ENCODE measurements at regions of chr11 and their contacts with region 1.

Region 1: GRCh38 chr11:85844426-85845129 is 10.6 kb upstream of the CCDC83 start:
- DNase-seq: peak; percentile 68 to 100
- H3K4me3 ChIP-seq: peak overlapping the region; percentile 22; the same call in 1 of the 2 replicates
- H3K27ac ChIP-seq: peak overlapping the region; percentile 94
- H3K4me1 ChIP-seq: peaks cover 29% of the 10 kb centered on the region
- H3K27me3 ChIP-seq: no peaks in the 10 kb centered on the region
- CTCF ChIP-seq: no peak

Region 2: GRCh38 chr11:85444479-85444878 is 400.1 kb before region 1 on chr11:
- CTCF ChIA-PET with region 1: no interaction called
- POLR2A ChIA-PET with region 1: no interaction called
- intact Hi-C with region 1: no loop called
- DNase-seq: no peak
- H3K4me3 ChIP-seq: no peak overlapping the region
- H3K27ac ChIP-seq: no peak overlapping the region
- H3K4me1 ChIP-seq: no peaks in the 10 kb centered on the region
- H3K27me3 ChIP-seq: no peaks in the 10 kb centered on the region
- CTCF ChIP-seq: no peak

Region 3: GRCh38 chr11:85664615-85665481 is 179.7 kb before region 1 on chr11 and contains the start of gene CREBZF:
- CTCF ChIA-PET with region 1: no interaction called
- POLR2A ChIA-PET with region 1: interaction called, 4 read pairs
- intact Hi-C with region 1: loop called (anchors 10 kb)
- DNase-seq: peak; percentile 88 to 93
- H3K4me3 ChIP-seq: peak within 1 kb of the TSS; percentile 98
- H3K27ac ChIP-seq: peak within 1 kb of the TSS; percentile 93
- H3K4me1 ChIP-seq: peaks cover 34% of the 10 kb centered on the region
- H3K27me3 ChIP-seq: no peaks in the 10 kb centered on the region
- CTCF ChIP-seq: no peak
- total RNA-seq, gene CREBZF: 60.3 and 66.1 TPM in 2 replicates

Region 4: GRCh38 chr11:85742873-85743275 is 101.7 kb before region 1 on chr11:
- CTCF ChIA-PET with region 1: no interaction called
- POLR2A ChIA-PET with region 1: no interaction called
- intact Hi-C with region 1: loop called (anchors 1 kb)
- DNase-seq: peak; percentile 35 to 99
- H3K4me3 ChIP-seq: no peak overlapping the region
- H3K27ac ChIP-seq: peak overlapping the region; percentile 97
- H3K4me1 ChIP-seq: peaks cover 72% of the 10 kb centered on the region
- H3K27me3 ChIP-seq: no peaks in the 10 kb centered on the region
- CTCF ChIP-seq: no peak

Region 5: GRCh38 chr11:85826116-85826855 is 18.3 kb before region 1 on chr11:
- CTCF ChIA-PET with region 1: no interaction called
- POLR2A ChIA-PET with region 1: no interaction called
- intact Hi-C with region 1: loop called (anchors 2 kb)
- DNase-seq: peak in 1 of 2 experiments; percentile 41
- H3K4me3 ChIP-seq: no peak overlapping the region
- H3K27ac ChIP-seq: peak overlapping the region; percentile 93
- H3K4me1 ChIP-seq: peaks cover 68% of the 10 kb centered on the region
- H3K27me3 ChIP-seq: no peaks in the 10 kb centered on the region
- CTCF ChIP-seq: peak; percentile 69